ENCODE measurements at regions of chr1 and their contacts with region 1.

Region 1: DNA sequence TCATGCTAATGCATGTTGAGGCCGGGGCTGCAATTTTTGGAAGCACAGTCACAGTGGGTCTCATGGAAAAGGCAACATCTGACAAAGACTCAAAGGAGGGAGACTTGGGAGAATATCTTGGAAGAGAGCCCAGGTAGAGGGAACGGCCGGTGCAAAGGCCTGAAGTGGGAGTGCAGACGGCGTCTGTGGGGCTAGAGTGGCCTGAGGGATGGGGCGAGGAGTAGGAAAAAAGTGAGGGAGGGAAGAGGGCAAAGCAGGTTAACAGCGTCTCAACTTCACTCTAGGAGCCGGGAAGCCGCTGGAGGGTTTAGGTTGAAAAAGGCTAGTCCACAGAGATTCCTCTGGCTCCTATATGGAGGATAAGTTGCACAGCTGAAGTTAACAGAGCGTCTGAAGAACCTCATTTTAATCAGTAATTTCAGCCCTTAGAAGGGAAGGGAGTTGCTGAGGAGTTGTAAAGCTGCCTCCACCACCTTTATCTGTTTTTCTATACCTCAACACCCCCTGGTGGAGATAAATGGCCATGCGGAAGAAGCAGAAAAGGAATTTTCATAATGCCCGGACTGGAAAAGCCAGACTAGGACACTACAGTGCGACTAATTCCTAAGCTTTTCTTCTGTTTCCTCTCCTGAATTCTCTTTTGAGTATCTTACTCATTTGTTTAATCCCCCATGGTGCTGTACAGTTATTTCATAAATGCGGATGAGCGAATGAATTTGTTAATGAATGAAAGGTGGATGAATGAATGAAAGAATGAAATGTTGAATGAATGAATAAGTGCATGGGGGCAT is 78.7 kb upstream of the ZNF281 start:
- DNase-seq: peak; percentile 46
- H3K4me3 Mint-ChIP-seq: no peak overlapping the region
- H3K27ac Mint-ChIP-seq: no peak overlapping the region
- H3K4me1 Mint-ChIP-seq: peaks cover 24% of the 10 kb centered on the region
- H3K27me3 Mint-ChIP-seq: peaks cover 21% of the 10 kb centered on the region

Region 2: DNA sequence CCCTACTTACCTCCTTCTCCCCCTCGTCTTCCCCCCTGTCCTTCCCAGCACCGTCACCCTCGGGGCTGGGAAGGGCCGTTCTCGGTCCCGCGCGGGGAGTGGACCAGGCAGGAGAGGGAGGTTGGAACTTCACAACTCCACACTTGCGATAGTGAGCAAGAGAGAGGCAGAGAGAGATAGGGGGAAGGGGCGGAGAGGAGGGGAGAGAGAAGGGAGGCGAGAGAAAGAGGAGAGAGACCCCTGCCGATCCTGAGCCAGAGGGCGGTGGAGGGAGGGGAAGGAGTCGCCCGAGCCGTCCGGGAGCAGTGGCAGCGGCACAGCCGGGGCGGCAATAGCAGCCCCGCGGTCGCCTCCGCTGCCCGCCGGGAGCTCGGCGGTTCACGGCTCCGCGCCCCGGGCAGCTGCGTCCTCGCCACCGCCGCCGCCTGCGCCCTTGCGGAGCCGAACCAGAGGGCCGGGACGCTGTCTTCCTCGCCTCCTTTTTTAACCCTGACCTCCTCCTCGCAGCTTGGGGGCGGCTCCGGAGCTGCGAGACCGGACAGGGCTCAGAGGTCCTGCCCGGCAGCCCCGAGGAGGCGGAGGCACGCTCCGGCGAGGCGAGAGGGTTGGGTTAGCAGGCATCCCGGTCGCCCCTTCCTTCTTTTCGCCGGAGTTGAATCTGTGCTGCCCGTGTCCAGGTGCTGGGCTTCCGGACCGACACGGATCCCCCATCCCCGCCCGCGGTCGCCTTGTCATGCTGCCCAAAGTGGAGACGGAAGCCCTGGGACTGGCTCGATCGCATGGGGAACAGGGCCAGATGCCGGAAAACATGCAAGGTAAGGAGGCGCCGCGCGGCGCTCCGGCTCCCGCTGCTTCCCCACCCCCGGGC is 449.4 kb before region 1 on chr1:
- intact Hi-C with region 1: loop called (anchors 5 kb)
- DNase-seq: no peak
- H3K4me3 Mint-ChIP-seq: peak overlapping the region; percentile 72
- H3K27ac Mint-ChIP-seq: no peak overlapping the region
- H3K4me1 Mint-ChIP-seq: peaks cover 27% of the 10 kb centered on the region
- H3K27me3 Mint-ChIP-seq: peaks cover 77% of the 10 kb centered on the region

Region 3: GRCh38 chr1:200258447-200259375 is 229.9 kb before region 1 on chr1:
- intact Hi-C with region 1: loop called (anchors 1 kb)
- DNase-seq: no peak
- H3K4me3 Mint-ChIP-seq: no peak overlapping the region
- H3K27ac Mint-ChIP-seq: no peak overlapping the region
- H3K4me1 Mint-ChIP-seq: peaks cover 35% of the 10 kb centered on the region
- H3K27me3 Mint-ChIP-seq: peaks cover 14% of the 10 kb centered on the region

Region 4: DNA sequence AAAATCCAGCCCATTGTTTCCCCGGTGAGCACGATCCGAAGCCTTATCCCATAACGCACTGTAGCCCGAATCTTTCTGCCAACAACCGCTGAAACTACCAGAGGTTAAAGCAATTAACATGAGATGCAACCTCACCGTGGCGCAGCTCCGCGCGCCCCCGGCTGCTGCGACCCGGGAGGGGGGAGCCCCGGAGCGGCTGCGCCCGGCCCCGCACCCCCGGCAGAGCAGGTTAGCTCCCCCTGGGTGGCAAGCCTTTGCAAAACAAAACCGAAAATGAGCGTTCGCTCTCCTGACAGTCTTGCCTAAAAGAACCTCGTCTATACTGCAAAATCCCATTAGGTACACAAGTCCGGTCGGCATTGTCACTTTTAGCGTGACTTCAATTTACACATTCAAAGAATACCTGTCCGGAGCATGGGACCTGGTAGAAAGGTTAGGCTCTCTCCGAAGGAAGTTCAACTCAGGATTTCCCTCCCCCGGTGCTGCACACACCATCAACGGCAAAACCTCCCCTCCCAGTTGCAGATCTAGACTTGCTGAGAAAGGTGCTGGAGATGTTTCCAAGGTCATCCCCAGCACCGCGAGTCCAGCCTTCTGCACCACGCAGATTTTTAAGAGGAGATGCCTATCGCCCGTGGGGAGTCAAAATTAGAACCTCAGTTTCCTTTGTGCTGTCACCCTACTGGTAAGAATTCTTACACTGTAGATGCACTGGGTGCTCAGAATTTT is 186.2 kb before region 1 on chr1:
- intact Hi-C with region 1: loop called (anchors 1 kb)
- DNase-seq: peak; percentile 53
- H3K4me3 Mint-ChIP-seq: peak overlapping the region; percentile 83
- H3K27ac Mint-ChIP-seq: no peak overlapping the region
- H3K4me1 Mint-ChIP-seq: peaks cover 23% of the 10 kb centered on the region
- H3K27me3 Mint-ChIP-seq: peaks cover 17% of the 10 kb centered on the region

Region 5: GRCh38 chr1:200399860-200400259 is 88.7 kb before region 1 on chr1:
- intact Hi-C with region 1: no loop called
- DNase-seq: no peak
- H3K4me3 Mint-ChIP-seq: no peak overlapping the region
- H3K27ac Mint-ChIP-seq: no peak overlapping the region
- H3K4me1 Mint-ChIP-seq: peaks cover 9% of the 10 kb centered on the region
- H3K27me3 Mint-ChIP-seq: no peaks in the 10 kb centered on the region

Region 6: GRCh38 chr1:200409761-200410565 is 78.6 kb before region 1 on chr1 and contains the start of gene ZNF281:
- intact Hi-C with region 1: loop called (anchors 1 kb)
- DNase-seq: peak; percentile 93
- H3K4me3 Mint-ChIP-seq: peak within 1 kb of the TSS; percentile 98
- H3K27ac Mint-ChIP-seq: peak within 1 kb of the TSS; percentile 96
- H3K4me1 Mint-ChIP-seq: peaks cover 64% of the 10 kb centered on the region
- H3K27me3 Mint-ChIP-seq: peaks cover 2% of the 10 kb centered on the region
- total RNA-seq, gene ZNF281: 23.5 and 24.1 TPM in 2 replicates

Region 7: DNA sequence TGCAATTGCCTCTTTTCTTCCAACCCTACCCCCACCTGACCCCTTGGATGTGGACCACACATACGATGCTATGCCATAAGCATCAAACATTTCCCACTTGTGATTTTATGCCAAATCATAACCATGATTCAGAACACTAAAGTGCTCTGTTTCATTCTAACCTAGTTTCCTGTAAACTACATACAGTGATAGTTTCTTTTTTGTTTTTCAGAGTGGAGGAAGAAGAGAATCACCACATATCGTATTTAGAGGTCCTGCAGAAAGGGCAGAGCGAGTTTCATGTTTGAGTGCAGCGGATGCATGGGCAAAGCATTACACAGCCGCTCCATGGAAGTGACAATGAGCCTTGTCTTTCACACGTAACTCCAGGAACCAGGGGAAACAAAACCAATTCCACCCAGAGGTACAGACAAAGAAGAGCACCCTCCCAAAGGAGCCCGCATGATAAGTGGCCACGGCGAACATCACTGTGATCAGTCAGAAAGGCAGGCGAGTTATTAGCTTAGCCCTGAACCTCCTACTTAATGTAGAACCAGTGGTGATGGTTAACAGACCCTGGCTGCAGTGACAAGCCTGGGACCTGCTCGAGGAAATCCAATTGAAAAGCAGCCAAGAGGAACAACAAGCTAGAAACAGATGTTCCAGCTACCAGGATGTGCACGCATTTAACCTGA is 14.7 kb before region 1 on chr1:
- intact Hi-C with region 1: loop called (anchors 1 kb)
- DNase-seq: no peak
- H3K4me3 Mint-ChIP-seq: peak overlapping the region; percentile 62
- H3K27ac Mint-ChIP-seq: peak overlapping the region; percentile 85
- H3K4me1 Mint-ChIP-seq: peaks cover 43% of the 10 kb centered on the region
- H3K27me3 Mint-ChIP-seq: peaks cover 2% of the 10 kb centered on the region

Measured in activated T-helper 1 cell treated with anti-CD3 and anti-CD28 coated beads, Interleukin-12 subunit alpha, Interleukin-12 subunit beta, Interleukin-2, Interleukin-4 antibody, amounts not matched to agents 30 ng/mL and 10 ng/mL and 1 ng/mL, durations not matched to agents 14 hours and 24 hours and 36 hours (primary cell).